CD8-positive, alpha-beta T cell (primary cell): ENCODE measurements at regions of chr19 and their contacts with region 1.

Region 1: GRCh38 chr19:41144403-41144802 is 30.2 kb downstream of the CYP2F1 start:
- DNase-seq: peak; percentile 79 to 94 (median 90)
- ATAC-seq: peak; percentile 95
- H3K4me3 ChIP-seq: no peak overlapping the region
- H3K4me3 Mint-ChIP-seq: no peak overlapping the region
- H3K27ac ChIP-seq: no peak overlapping the region
- H3K27ac Mint-ChIP-seq: no peak overlapping the region
- H3K4me1 ChIP-seq: no peaks in the 10 kb centered on the region
- H3K4me1 Mint-ChIP-seq: peaks cover 2% of the 10 kb centered on the region
- H3K27me3 ChIP-seq: peaks cover 0 to 6% of the 10 kb centered on the region in 2 experiments
- H3K27me3 Mint-ChIP-seq: peaks cover 10% of the 10 kb centered on the region
- CTCF ChIP-seq: peak; percentile 81

Region 2: GRCh38 chr19:40658031-40658430 is 486.4 kb before region 1 on chr19:
- CTCF ChIA-PET with region 1: interaction called, 46 read pairs
- POLR2A ChIA-PET with region 1: no interaction called
- intact Hi-C with region 1: loop called in 1 of 2 experiments (anchors 1 kb)
- DNase-seq: no peak
- ATAC-seq: no peak
- H3K4me3 ChIP-seq: no peak overlapping the region
- H3K4me3 Mint-ChIP-seq: no peak overlapping the region
- H3K27ac ChIP-seq: no peak overlapping the region
- H3K27ac Mint-ChIP-seq: no peak overlapping the region
- H3K4me1 ChIP-seq: peaks cover 3% of the 10 kb centered on the region
- H3K4me1 Mint-ChIP-seq: peaks cover 4% of the 10 kb centered on the region
- H3K27me3 ChIP-seq: no peaks in the 10 kb centered on the region
- H3K27me3 Mint-ChIP-seq: no peaks in the 10 kb centered on the region
- CTCF ChIP-seq: no peak

Region 3: GRCh38 chr19:40806488-40807468 is 337.6 kb before region 1 on chr19:
- CTCF ChIA-PET with region 1: no interaction called
- POLR2A ChIA-PET with region 1: no interaction called
- intact Hi-C with region 1: loop called in 1 of 2 experiments (anchors 10 kb)
- DNase-seq: peak; percentile 54 to 95 (median 81)
- ATAC-seq: peak; percentile 48
- H3K4me3 ChIP-seq: peak overlapping the region in 1 of 2 experiments; percentile 35
- H3K4me3 Mint-ChIP-seq: peak overlapping the region; percentile 83
- H3K27ac ChIP-seq: peak overlapping the region; percentile 66 to 88
- H3K27ac Mint-ChIP-seq: peak overlapping the region; percentile 99
- H3K4me1 ChIP-seq: peaks cover 86% of the 10 kb centered on the region
- H3K4me1 Mint-ChIP-seq: peaks cover 87% of the 10 kb centered on the region
- H3K27me3 ChIP-seq: no peaks in the 10 kb centered on the region
- H3K27me3 Mint-ChIP-seq: no peaks in the 10 kb centered on the region
- CTCF ChIP-seq: peak; percentile 87

Region 4: DNA sequence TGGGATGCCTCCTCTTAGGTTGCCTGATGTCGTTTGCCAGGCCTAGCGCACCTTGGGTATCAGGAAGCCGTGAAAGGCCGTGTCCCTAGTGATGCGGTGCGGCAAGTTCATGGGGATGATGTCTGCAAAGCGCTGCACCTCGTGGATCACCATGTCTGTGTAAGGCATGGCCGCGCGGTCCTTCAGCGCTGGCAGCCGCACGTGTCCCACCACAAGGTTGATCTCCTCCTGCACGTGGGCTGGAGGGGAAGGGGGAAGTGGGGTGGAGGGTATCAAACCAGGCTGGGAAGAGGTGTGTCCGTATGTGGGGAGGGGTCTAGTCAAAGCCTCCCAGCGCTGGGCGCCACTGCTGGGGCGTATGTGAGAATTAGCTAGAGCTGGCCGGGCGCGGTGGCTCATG is 322.2 kb before region 1 on chr19:
- CTCF ChIA-PET with region 1: interaction called, 4 read pairs
- POLR2A ChIA-PET with region 1: no interaction called
- intact Hi-C with region 1: loop called (anchors 10 kb)
- DNase-seq: no peak
- ATAC-seq: no peak
- H3K4me3 ChIP-seq: no peak overlapping the region
- H3K4me3 Mint-ChIP-seq: no peak overlapping the region
- H3K27ac ChIP-seq: no peak overlapping the region
- H3K27ac Mint-ChIP-seq: no peak overlapping the region
- H3K4me1 ChIP-seq: peaks cover 36% of the 10 kb centered on the region
- H3K4me1 Mint-ChIP-seq: peaks cover 38% of the 10 kb centered on the region
- H3K27me3 ChIP-seq: no peaks in the 10 kb centered on the region
- H3K27me3 Mint-ChIP-seq: no peaks in the 10 kb centered on the region
- CTCF ChIP-seq: no peak

Region 5: GRCh38 chr19:40974633-40975037 is 169.8 kb before region 1 on chr19:
- CTCF ChIA-PET with region 1: interaction called, 18 read pairs
- POLR2A ChIA-PET with region 1: no interaction called
- intact Hi-C with region 1: loop called (anchors 1 kb)
- DNase-seq: peak; percentile 61 to 90 (median 80)
- ATAC-seq: peak; percentile 72
- H3K4me3 ChIP-seq: no peak overlapping the region
- H3K4me3 Mint-ChIP-seq: no peak overlapping the region
- H3K27ac ChIP-seq: no peak overlapping the region
- H3K27ac Mint-ChIP-seq: no peak overlapping the region
- H3K4me1 ChIP-seq: peaks cover 22% of the 10 kb centered on the region
- H3K4me1 Mint-ChIP-seq: peaks cover 29% of the 10 kb centered on the region
- H3K27me3 ChIP-seq: no peaks in the 10 kb centered on the region
- H3K27me3 Mint-ChIP-seq: peaks cover 10% of the 10 kb centered on the region
- CTCF ChIP-seq: peak; percentile 92

Region 6: DNA sequence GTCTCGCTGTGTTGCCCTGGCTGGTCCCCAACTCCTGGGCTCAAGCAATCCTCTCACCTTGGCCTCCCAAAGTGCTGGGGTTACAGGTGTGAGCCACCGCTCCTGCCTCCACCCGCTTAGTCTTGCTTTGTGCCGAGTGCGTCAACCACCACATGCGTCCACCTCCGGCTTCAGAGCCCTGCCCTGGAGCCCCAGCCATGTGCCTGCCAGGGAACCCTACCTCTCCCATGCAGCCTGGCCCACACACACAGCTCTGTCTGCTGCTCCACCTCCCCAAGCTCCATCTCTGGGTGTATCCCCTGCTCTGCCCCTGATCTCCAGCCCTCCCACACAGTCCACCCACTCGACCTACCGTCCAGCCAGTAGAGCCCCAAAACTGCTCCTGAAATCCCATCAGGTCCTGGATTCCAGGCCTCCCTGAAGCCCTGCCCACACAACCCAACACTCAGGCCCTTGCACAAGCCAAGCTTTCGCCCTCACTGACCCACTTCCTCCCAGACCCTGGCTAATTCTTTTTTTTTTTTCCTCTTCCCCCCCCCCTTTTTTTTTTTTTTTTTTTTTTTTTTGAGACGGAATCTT is 20.6 kb before region 1 on chr19:
- CTCF ChIA-PET with region 1: interaction called, 14 read pairs
- POLR2A ChIA-PET with region 1: interaction called, 5 read pairs
- intact Hi-C with region 1: loop called (anchors 1 kb)
- DNase-seq: peak in 1 of 9 experiments; percentile 20
- ATAC-seq: no peak
- H3K4me3 ChIP-seq: no peak overlapping the region
- H3K4me3 Mint-ChIP-seq: no peak overlapping the region
- H3K27ac ChIP-seq: no peak overlapping the region
- H3K27ac Mint-ChIP-seq: peak overlapping the region; percentile 41
- H3K4me1 ChIP-seq: peaks cover 23% of the 10 kb centered on the region
- H3K4me1 Mint-ChIP-seq: peaks cover 44% of the 10 kb centered on the region
- H3K27me3 ChIP-seq: no peaks in the 10 kb centered on the region
- H3K27me3 Mint-ChIP-seq: no peaks in the 10 kb centered on the region
- CTCF ChIP-seq: no peak

Region 7: DNA sequence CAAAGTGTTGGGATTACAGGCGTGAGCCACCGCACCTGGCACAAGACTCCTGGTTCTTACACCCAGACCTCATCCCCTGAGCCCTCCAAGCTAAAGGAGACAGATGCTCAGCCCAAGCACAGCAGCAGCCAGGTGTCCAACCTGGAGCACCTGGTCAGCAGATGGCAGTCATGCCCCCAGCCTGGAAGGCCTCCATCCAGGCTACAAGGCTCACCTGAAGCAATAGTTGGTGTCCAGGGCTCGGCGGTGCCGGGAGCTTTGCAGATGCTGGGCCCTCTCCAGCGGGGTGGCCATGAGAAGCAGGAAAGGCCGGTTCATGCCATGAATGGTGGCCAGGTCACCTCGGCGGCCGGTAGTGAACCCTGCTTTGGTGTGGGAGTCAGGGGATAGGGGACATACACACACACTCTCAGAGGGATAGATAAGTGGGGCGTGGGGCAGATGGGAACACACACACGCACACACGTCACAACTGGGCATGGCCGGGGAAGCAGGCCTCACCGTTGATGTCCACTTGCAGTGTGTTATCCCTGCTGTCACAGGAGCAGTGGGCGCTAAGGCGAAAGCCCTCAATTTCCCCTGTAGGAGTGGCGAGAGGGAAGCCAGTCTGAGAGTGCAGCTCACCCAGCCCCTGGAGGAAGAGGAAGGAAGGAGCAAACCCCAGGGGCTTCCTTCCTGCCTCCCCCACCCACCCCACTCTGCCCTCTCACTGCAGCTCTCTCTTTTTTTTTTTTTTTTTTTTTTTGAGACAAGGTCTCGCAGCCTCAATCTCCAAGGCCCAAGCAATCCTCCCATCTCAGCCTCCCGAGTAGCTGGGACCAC is 197.5 kb after region 1 on chr19:
- CTCF ChIA-PET with region 1: no interaction called
- POLR2A ChIA-PET with region 1: no interaction called
- intact Hi-C with region 1: no loop called
- DNase-seq: peak in 4 of 9 experiments; percentile 24 to 62 (median 38)
- ATAC-seq: peak; percentile 39
- H3K4me3 ChIP-seq: no peak overlapping the region
- H3K4me3 Mint-ChIP-seq: peak overlapping the region; percentile 53
- H3K27ac ChIP-seq: peak overlapping the region in 1 of 2 experiments; percentile 40
- H3K27ac Mint-ChIP-seq: peak overlapping the region; percentile 41
- H3K4me1 ChIP-seq: peaks cover 38% of the 10 kb centered on the region
- H3K4me1 Mint-ChIP-seq: peaks cover 53% of the 10 kb centered on the region
- H3K27me3 ChIP-seq: no peaks in the 10 kb centered on the region
- H3K27me3 Mint-ChIP-seq: no peaks in the 10 kb centered on the region
- CTCF ChIP-seq: no peak

Region 8: DNA sequence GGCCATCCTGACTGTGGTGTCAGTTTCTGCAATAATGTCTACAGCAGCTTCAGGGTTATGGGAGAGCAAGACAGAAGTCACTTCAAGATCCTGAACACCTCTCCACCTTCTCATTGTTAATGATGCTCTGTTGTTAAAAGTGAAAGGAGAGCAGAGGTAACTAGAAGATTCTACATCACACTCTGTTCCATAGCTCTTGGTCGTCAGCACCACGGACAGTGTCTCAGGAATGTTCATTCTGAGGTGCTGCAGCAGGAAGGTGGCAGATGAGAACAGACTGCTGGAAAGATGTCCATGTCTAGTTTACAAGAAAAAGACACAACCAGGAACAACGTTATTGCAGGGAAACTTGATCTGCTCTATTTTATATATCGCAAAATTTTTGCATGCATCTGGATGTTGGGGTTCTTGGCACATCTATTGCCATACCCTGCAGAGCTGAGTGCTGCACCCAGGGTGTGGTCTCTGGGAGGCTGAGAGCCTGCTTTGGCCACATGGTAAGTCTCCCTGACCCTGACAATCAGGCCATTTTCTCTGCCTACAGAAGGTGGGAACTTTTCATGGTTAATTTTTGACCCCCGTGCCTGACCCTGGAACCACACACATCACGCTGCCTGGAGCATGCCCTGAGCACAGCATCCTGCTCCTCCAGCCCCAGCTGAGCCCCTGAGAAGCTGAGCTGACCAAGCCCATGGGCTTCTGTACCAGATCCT is 444.2 kb after region 1 on chr19:
- CTCF ChIA-PET with region 1: no interaction called
- POLR2A ChIA-PET with region 1: no interaction called
- intact Hi-C with region 1: no loop called
- DNase-seq: peak in 3 of 9 experiments; percentile 24 to 31 (median 26)
- ATAC-seq: no peak
- H3K4me3 ChIP-seq: no peak overlapping the region
- H3K4me3 Mint-ChIP-seq: no peak overlapping the region
- H3K27ac ChIP-seq: no peak overlapping the region
- H3K27ac Mint-ChIP-seq: no peak overlapping the region
- H3K4me1 ChIP-seq: no peaks in the 10 kb centered on the region
- H3K4me1 Mint-ChIP-seq: no peaks in the 10 kb centered on the region
- H3K27me3 ChIP-seq: no peaks in the 10 kb centered on the region
- H3K27me3 Mint-ChIP-seq: peaks cover 18% of the 10 kb centered on the region
- CTCF ChIP-seq: no peak

Region 9: GRCh38 chr19:41893899-41894298 is 749.5 kb after region 1 on chr19:
- CTCF ChIA-PET with region 1: no interaction called
- POLR2A ChIA-PET with region 1: no interaction called
- intact Hi-C with region 1: no loop called
- DNase-seq: peak in 4 of 9 experiments; percentile 39 to 68 (median 58)
- ATAC-seq: peak; percentile 39
- H3K4me3 ChIP-seq: no peak overlapping the region
- H3K4me3 Mint-ChIP-seq: peak overlapping the region; percentile 11
- H3K27ac ChIP-seq: peak overlapping the region; percentile 37 to 59
- H3K27ac Mint-ChIP-seq: peak overlapping the region; percentile 90
- H3K4me1 ChIP-seq: peaks cover 92% of the 10 kb centered on the region
- H3K4me1 Mint-ChIP-seq: peaks cover 74% of the 10 kb centered on the region
- H3K27me3 ChIP-seq: no peaks in the 10 kb centered on the region
- H3K27me3 Mint-ChIP-seq: no peaks in the 10 kb centered on the region
- CTCF ChIP-seq: no peak